Left colon (tissue), 2 donors: ENCODE measurements at regions of chr13 and their contacts with region 1.

Region 1: DNA sequence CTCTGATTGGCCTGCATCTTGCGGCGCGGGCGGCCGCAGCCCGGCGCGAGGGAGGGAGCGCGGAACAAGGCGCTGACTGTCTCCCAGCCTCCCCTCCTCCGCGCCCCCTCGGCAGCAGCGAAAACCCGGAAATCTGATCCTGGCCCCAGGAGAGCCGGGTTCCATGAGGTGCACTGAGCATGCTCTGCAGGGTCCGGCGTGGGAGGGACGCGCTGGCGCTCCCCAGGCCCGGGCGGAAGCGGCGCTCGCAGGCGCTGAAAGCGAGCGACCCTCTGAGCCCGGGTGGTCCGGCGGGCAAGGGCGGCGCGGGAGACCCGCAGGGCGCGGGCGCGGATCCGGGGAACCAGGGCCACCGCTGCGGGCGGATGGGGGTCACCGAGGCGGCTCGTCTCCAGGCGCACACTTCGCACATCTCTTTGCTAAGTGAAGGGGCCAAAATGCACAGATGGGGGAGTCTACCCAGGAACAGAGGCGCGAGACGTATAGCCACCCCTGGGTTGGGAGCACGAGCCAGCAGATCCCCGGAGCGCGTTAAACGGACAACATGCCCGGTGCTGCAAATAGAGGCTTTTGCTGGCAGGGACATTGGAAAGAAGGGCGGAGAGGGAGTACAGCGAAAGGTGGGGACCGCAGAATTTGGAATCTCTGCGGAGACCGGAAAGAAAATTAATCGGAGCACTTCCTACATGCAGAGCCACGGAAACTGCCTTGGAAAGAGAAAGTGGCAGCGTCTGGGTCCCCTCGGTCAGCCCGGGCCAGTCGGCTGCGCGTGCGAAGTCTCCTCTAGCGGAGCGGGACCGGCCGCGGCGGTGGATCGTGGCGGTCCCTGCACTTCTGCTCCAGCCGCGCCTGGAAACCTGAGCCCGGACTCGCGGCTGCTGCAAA is 510 bp upstream of the PCDH9 start:
- DNase-seq: peak; percentile 87 to 89
- ATAC-seq: peak; percentile 99

Region 2: DNA sequence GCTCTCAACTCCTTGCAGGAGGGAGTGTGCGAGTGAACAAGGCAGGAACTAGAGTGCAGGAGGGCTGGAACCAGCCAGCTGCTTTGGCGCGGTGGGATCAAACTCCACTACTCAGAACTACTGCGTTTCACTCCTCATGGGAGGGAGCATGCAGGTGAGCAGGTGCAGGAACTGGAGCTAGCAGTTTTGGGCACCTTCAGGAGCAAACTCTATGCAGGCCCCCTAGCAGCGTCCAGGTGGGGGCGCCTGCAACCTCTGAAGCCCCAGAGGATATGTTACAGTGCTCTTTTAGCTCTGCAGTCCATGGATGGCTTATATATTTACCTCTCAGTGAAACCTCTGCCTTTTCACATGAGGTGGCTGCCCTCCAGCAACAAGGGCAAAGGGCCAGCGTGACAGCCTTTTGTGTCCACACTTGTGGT is 1303.9 kb before region 1 on chr13:
- intact Hi-C with region 1: loop called in 1 of 2 experiments (anchors 10 kb)
- DNase-seq: peak in 1 of 2 donors; percentile 17
- ATAC-seq: peak; percentile 44

Region 3: GRCh38 chr13:67001363-67001762 is 229.3 kb before region 1 on chr13:
- intact Hi-C with region 1: no loop called
- DNase-seq: no peak
- ATAC-seq: no peak